K562 (cell line): ENCODE measurements at regions of chr1 and their contacts with region 1.

Region 1: DNA sequence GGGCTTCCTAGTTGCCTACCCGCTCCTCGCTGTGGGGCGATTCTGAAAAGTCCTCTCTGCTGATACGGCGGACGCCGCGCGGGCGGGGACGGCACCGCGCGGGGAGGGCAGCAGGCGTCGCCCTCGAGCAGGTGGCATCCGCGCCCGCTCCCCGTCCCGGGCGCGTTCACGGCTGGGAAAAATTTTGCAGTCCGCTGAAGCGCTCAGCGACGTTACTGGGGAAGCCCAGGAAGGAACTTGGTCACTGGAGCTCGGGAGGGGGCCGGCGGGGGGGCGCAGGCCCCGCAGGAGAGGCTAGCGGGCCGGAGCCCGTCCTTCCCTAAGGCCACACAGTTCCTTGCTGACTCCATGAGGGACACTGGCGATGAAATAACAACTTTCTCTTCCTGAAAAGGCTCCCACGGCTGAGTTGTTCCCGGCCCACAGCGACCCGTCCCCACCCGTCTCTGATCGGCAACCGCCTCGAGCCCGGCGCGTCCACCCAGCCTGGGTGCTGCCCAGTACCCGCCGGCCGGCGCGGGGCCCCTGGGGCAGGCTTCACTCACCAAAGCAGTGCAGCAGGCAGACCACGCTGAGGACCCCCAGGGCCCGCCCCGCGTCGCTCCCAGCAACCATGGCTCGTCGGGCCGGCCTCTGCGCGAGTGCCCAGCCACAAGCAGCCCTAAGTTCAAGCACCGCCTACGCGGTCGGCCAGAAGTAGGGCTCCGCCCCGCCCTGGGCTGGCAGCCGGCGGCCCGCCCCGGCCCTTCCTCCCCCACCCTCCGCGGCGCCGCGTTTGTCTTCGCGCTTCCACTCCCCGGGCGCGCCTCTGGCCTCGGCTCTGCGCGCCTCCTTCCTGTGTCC is at the start of gene CD58:
- DNase-seq: peak; percentile 95 to 97 (median 95)
- ATAC-seq: peak; percentile 91
- H3K4me3 ChIP-seq: peak within 1 kb of the TSS; percentile 82
- H3K27ac ChIP-seq: peak within 1 kb of the TSS; percentile 88
- H3K4me1 ChIP-seq: peaks cover 45 to 54% of the 10 kb centered on the region in 2 experiments
- H3K27me3 ChIP-seq: no peaks in the 10 kb centered on the region
- CTCF ChIP-seq: peak; percentile 80 to 90 (median 83)
- EP300 ChIP-seq: no peak; the same call in 1 of the 2 replicates
- POLR2A ChIP-seq: peak; percentile 89
- RAD21 ChIP-seq: peak; percentile 52 to 59
- polyA plus RNA-seq, gene CD58: 24.6 to 33.0 TPM

Region 2: DNA sequence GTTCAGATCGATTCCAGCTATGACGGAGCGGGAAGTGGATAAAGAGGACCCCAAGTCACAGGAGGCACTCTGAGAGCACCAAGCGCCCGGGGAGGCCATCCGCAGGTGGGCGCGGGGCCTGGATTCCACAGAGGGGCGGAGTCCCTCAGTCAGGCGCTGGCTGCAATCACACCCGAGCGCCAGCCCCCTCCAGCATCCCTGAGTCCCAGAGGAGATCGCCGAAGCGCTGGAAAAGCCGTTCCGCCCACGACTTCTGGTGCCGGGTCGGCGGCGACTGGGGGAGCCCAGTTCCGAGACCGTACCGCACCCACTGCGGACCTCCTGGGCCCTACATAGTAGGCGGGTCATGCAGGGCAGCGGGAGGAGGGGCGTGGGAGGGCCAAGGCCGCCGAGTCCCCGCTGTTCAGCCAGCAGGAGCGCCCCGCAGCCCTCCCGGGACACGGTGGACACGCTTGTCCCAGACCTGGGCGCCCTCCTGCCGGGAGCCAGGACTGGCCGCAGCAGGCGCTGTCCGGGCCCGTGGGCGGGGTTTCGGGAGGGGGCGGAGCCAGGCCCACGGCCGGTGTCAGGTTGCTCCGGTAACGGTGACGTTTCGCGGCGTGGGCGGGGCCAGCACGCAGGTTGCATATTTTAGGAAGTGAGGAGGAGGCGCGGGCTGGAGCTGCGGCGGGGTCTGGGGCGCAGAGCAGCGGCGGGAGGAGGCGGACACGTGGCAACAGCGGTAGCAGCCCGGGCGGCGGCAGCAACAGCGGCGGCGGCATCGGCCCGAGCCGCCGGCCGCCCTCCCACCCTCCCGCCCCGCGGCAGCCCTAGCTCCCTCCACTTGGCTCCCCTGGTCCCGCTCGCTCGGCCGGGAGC is 197.8 kb before region 1 on chr1 and contains the start of gene ATP1A1:
- CTCF ChIA-PET with region 1: no interaction called
- POLR2A ChIA-PET with region 1: no interaction called
- in situ Hi-C with region 1: no loop called
- intact Hi-C with region 1: no loop called
- DNase-seq: peak; percentile 97 to 99 (median 99)
- ATAC-seq: peak; percentile 84
- H3K4me3 ChIP-seq: peak within 1 kb of the TSS; percentile 73
- H3K27ac ChIP-seq: peak within 1 kb of the TSS; percentile 90
- H3K4me1 ChIP-seq: peaks cover 18 to 37% of the 10 kb centered on the region in 2 experiments
- H3K27me3 ChIP-seq: 0 out of 5 replicates have a peak, but pooled peaks cover 0 to 3% of the 10 kb centered on the region in 2 experiments
- CTCF ChIP-seq: peak in 1 of 3 experiments; percentile 18; a peak in 1 of 6 replicates
- EP300 ChIP-seq: peak; percentile 55; the same call in 1 of the 2 replicates
- POLR2A ChIP-seq: peak; percentile 79
- RAD21 ChIP-seq: no peak; a peak in 1 of 4 replicates
- polyA plus RNA-seq, gene ATP1A1: 113 to 135 TPM

Region 3: DNA sequence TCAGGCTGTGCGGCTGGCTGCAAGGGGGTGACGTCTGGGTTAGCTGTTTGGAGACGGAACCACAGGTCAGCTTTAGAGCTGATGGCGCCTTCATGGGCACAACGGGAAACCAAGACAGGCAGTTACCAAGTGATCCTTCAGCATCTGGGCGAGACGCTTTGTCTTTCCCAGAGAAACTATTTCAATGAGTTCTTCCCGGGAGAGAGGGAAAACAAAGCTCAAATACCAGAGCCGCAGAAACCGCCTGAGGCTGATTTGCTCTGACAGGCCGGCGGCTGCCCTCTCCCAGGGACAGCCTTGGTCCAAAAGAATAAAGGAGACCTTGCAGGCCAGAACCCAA is 76.3 kb before region 1 on chr1:
- CTCF ChIA-PET with region 1: no interaction called
- POLR2A ChIA-PET with region 1: no interaction called
- in situ Hi-C with region 1: no loop called
- intact Hi-C with region 1: no loop called
- DNase-seq: no peak
- ATAC-seq: no peak
- H3K4me3 ChIP-seq: no peak overlapping the region
- H3K27ac ChIP-seq: no peak overlapping the region
- H3K4me1 ChIP-seq: peaks cover 14 to 31% of the 10 kb centered on the region in 2 experiments
- H3K27me3 ChIP-seq: no peaks in the 10 kb centered on the region; a peak in 1 of 5 replicates
- CTCF ChIP-seq: no peak
- EP300 ChIP-seq: no peak
- POLR2A ChIP-seq: no peak
- RAD21 ChIP-seq: no peak

Region 4: DNA sequence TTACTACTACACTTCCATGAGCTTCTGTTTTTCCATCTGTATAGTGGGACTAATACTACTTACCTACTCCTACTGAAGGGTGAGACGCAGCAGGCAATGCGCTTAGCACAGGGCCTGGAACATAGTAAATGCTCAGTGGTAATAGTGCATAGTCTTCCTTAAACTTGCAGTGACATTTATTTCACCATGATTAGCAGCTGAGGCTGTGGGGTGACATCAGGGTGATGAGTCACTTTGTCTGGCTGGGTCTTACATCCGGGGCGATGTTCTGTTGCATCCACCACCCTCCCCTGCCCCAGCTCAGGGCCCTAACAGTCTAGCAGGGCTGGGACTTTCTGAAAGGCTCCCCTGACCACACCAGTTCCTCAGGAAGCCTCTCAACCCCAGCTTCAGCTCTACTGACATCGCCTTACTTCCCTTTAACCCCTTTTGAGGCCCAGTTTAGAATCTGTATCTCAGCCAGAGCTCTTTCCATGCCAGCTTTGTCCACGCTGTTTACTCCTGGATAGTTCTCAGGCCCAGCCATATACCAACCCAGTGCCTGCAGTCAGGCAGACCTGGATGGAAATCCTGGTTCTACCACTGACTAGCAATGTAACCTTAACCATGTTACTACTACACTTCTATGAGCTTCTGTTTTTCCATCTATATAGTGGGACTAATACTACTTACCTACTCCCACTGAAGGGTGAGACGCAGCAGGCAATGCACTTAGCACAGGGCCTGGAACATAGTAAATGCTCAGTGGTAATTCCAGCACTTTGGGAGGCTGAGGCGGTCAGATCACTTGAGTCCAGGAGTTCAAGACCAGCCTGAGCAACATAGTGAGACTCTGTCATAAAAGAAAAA is 66.0 kb before region 1 on chr1:
- CTCF ChIA-PET with region 1: interaction called, 3 read pairs
- POLR2A ChIA-PET with region 1: interaction called, 4 read pairs
- in situ Hi-C with region 1: no loop called
- intact Hi-C with region 1: loop called (anchors 1 kb)
- DNase-seq: peak; percentile 90 to 97 (median 93)
- ATAC-seq: peak; percentile 91
- H3K4me3 ChIP-seq: no peak overlapping the region
- H3K27ac ChIP-seq: peak overlapping the region; percentile 99
- H3K4me1 ChIP-seq: peaks cover 45 to 82% of the 10 kb centered on the region in 2 experiments
- H3K27me3 ChIP-seq: no peaks in the 10 kb centered on the region
- CTCF ChIP-seq: no peak
- EP300 ChIP-seq: peak; percentile 80
- POLR2A ChIP-seq: peak; percentile 60
- RAD21 ChIP-seq: peak in 1 of 2 experiments; percentile 36; a peak in 1 of 4 replicates

Region 5: DNA sequence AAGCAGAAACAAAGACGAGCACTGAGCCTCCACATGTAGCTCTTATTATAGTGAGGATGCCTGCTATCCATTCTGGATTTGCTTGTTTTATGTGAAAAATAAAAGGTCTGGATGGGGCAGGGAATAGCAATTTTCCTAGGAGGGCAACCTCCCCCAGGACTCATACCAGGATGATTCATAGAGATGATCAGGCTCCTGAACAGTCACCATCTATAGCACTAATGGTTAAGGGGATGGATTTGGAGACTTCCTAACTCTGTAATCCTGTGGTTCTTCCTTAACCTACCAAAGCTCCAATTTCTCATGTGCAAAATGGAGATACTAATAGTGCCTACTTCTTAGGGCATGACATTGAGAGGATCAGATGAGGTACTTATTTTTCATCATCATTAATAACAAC is 34.7 kb after region 1 on chr1:
- CTCF ChIA-PET with region 1: no interaction called
- POLR2A ChIA-PET with region 1: no interaction called
- in situ Hi-C with region 1: no loop called
- intact Hi-C with region 1: no loop called
- DNase-seq: no peak
- ATAC-seq: no peak
- H3K4me3 ChIP-seq: no peak overlapping the region
- H3K27ac ChIP-seq: no peak overlapping the region
- H3K4me1 ChIP-seq: peaks cover 0 to 4% of the 10 kb centered on the region in 2 experiments; a peak in 2 of 5 replicates
- H3K27me3 ChIP-seq: no peaks in the 10 kb centered on the region
- CTCF ChIP-seq: no peak
- EP300 ChIP-seq: no peak
- POLR2A ChIP-seq: no peak
- RAD21 ChIP-seq: no peak

Region 6: DNA sequence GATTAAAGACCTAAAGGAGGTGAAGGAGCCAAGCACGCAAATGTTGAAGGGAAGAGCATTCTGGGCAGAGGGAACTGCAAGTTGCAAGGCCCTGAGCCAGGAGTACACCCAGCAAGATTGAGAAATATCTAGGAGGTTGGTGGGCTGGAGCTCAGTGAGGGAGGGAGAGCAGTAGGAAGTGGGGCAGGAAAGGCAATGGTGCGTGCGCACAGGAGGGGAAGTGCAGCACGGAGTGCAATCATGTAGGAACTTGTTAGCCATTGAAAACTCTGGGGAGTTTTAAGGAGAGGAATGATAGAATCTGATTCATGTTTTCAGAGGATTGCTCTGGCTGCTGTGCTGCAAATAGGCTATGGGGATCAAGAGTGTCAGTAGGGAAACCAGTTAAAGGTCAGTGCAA is 110.2 kb after region 1 on chr1:
- CTCF ChIA-PET with region 1: no interaction called
- POLR2A ChIA-PET with region 1: no interaction called
- in situ Hi-C with region 1: no loop called
- intact Hi-C with region 1: loop called (anchors 2 kb)
- DNase-seq: no peak
- ATAC-seq: no peak
- H3K4me3 ChIP-seq: no peak overlapping the region
- H3K27ac ChIP-seq: peak overlapping the region; percentile 84
- H3K4me1 ChIP-seq: peaks cover 43 to 54% of the 10 kb centered on the region in 2 experiments
- H3K27me3 ChIP-seq: no peaks in the 10 kb centered on the region
- CTCF ChIP-seq: no peak
- EP300 ChIP-seq: no peak
- POLR2A ChIP-seq: no peak
- RAD21 ChIP-seq: no peak

Region 7: GRCh38 chr1:116693759-116694482 is 123.3 kb after region 1 on chr1:
- CTCF ChIA-PET with region 1: no interaction called
- POLR2A ChIA-PET with region 1: no interaction called
- in situ Hi-C with region 1: no loop called
- intact Hi-C with region 1: no loop called
- DNase-seq: peak in 1 of 4 experiments; percentile 54
- ATAC-seq: peak; percentile 9; the same call in 2 of the 3 replicates
- H3K4me3 ChIP-seq: no peak overlapping the region
- H3K27ac ChIP-seq: no peak overlapping the region; the same call in 1 of the 3 replicates
- H3K4me1 ChIP-seq: peaks cover 27 to 65% of the 10 kb centered on the region in 2 experiments; a peak in 4 of 5 replicates
- H3K27me3 ChIP-seq: no peaks in the 10 kb centered on the region
- CTCF ChIP-seq: no peak
- EP300 ChIP-seq: no peak
- POLR2A ChIP-seq: no peak
- RAD21 ChIP-seq: no peak

Region 8: DNA sequence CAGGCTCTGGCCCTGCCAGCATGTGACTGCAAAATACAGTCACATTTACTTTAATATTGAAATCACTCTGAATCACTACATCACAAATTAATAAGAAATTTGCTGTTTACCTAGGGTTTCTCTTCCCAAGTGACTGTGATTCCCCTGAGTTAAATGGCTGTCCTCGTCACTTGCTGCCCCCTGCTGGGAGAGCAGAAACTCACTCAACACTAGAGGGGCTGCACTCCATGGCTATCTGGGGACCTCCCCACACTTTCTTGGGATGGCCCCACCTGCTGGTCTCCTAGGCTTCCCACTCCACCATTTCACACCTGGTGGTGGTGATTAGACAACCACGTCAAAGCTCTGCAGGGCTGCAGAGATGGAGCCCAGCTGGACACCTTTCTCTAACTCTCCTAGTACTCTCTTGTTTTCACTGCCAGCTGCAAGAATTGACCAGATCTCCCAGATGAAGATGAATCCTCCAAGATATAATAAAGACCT is 247.0 kb after region 1 on chr1:
- CTCF ChIA-PET with region 1: interaction called, 5 read pairs
- POLR2A ChIA-PET with region 1: no interaction called
- in situ Hi-C with region 1: loop called (anchors 5 kb)
- intact Hi-C with region 1: loop called (anchors 1 kb)
- DNase-seq: peak; percentile 86 to 96 (median 92)
- ATAC-seq: peak; percentile 99
- H3K4me3 ChIP-seq: no peak overlapping the region
- H3K27ac ChIP-seq: no peak overlapping the region
- H3K4me1 ChIP-seq: no peaks in the 10 kb centered on the region; a peak in 1 of 5 replicates
- H3K27me3 ChIP-seq: no peaks in the 10 kb centered on the region
- CTCF ChIP-seq: peak; percentile 96 to 98 (median 98)
- EP300 ChIP-seq: 0 out of 2 replicates have a peak, but pooled peaks have one; percentile 10
- POLR2A ChIP-seq: no peak
- RAD21 ChIP-seq: peak; percentile 83 to 97

Region 9: DNA sequence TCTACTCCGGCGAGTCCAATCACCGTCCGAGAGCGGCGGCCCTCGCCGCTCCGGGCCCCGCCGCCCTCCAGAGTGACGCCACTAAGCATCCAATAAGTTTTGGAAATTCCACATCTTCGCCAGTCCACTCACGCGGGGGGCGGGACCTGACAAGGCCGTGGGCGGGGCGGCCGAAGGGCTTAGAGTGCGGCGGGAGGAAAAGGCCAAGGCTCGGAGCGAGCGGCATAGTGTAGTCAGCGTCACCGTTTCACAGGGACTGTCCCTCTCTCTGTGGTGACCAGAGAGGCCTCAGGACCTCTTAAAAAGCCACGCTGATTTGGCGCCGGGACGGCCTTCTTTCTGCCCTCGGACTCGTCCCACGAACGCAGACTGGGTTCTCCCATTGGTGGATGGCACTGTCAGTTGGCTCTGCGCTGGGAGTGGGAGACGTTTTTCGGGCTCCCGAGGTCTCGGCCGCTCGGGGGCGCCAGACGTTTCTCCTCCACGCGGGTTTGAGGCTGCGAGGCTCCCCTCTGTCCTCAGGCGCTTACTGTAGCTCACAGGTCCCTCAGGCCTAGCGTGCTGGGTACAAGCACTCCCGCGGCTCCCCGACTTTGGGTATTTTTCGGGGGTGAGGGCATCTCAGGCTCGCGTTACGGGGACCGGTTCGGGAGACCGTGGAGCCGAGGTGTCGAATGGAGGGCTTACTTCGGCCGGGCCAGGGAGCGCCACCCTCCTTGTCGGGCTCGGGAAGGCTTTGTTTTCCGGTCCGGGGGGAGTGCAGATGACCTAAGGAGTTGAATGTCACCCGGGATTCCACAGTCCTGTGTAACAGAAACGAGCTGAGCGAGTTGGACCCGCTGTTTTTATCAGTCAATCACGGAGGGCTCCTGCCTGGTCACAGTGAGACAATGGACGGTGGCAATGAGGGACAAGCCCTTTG is 551.5 kb after region 1 on chr1:
- CTCF ChIA-PET with region 1: no interaction called
- POLR2A ChIA-PET with region 1: no interaction called
- in situ Hi-C with region 1: no loop called
- intact Hi-C with region 1: loop called (anchors 10 kb)
- DNase-seq: peak; percentile 96 to 97 (median 96)
- ATAC-seq: peak; percentile 98
- H3K4me3 ChIP-seq: peak overlapping the region; percentile 51
- H3K27ac ChIP-seq: peak overlapping the region; percentile 82
- H3K4me1 ChIP-seq: peaks cover 6 to 17% of the 10 kb centered on the region in 2 experiments; a peak in 4 of 5 replicates
- H3K27me3 ChIP-seq: peaks cover 6% of the 10 kb centered on the region in 2 experiments; a peak in 1 of 5 replicates
- CTCF ChIP-seq: peak; percentile 77 to 88 (median 81)
- EP300 ChIP-seq: no peak
- POLR2A ChIP-seq: peak; percentile 79
- RAD21 ChIP-seq: peak; percentile 62 to 70